ENCODE measurements at regions of chr14 and their contacts with region 1.

Region 1: GRCh38 chr14:99628832-99629618 is 15.9 kb upstream of the HHIPL1 start:
- DNase-seq: no peak
- H3K4me3 ChIP-seq: 0 out of 2 replicates have a peak overlapping the region, but pooled peaks have one; percentile 15
- CTCF ChIP-seq: peak; percentile 99

Region 2: GRCh38 chr14:99511421-99512109 is 117.5 kb before region 1 on chr14:
- CTCF ChIA-PET with region 1: interaction called, 41 read pairs
- POLR2A ChIA-PET with region 1: no interaction called
- DNase-seq: peak; percentile 49
- H3K4me3 ChIP-seq: no peak overlapping the region
- CTCF ChIP-seq: no peak

Region 3: GRCh38 chr14:99518441-99519346 is 110.3 kb before region 1 on chr14:
- CTCF ChIA-PET with region 1: interaction called, 174 read pairs
- POLR2A ChIA-PET with region 1: no interaction called
- DNase-seq: no peak
- H3K4me3 ChIP-seq: no peak overlapping the region
- CTCF ChIP-seq: peak; percentile 98

Region 4: GRCh38 chr14:99524804-99525698 is 104.0 kb before region 1 on chr14:
- CTCF ChIA-PET with region 1: interaction called, 174 read pairs
- POLR2A ChIA-PET with region 1: no interaction called
- DNase-seq: no peak
- H3K4me3 ChIP-seq: no peak overlapping the region
- CTCF ChIP-seq: peak; percentile 62

Region 5: DNA sequence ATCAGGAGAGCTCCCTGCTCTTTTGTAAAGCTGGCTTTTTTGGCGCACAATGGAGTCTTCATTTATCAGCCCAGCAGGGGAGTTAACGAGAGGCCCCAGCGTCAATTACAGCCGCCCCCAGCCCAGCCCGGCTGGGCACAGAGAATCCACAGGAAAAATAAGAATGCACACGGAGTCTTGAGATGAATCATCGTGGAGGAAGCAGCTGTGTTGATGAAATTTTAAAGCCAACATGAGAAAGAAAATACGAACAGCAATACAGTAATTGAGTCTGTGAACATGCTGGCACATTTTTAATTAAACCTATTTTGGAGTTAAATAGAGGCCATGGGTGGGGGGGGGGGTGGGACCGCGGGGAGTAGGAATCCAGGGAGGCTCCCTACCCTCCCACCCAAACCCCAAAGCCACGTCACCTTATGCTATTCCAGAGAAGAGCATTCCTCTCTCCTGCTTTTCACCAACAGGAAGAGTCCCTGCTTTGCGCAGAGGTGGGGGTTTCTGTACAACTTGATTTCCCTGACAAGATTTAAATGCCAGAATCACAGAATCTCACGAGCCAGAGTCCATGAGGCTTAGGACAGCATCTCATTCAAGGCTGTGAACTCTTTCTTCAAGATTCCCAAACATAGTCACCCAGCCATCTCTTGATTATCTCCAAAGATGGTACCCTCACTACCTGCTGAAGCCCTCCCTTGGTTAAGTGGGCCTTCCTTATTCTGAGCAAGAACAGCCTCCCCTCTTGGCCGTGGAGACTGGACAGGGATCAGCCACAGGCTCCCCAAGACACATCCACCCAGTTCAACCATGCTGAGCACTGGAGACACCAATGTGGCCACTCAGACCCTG is 97.6 kb before region 1 on chr14:
- CTCF ChIA-PET with region 1: interaction called, 174 read pairs
- POLR2A ChIA-PET with region 1: no interaction called
- DNase-seq: peak; percentile 28
- H3K4me3 ChIP-seq: no peak overlapping the region
- CTCF ChIP-seq: no peak

Region 6: GRCh38 chr14:99609245-99610117 is 19.5 kb before region 1 on chr14:
- CTCF ChIA-PET with region 1: interaction called, 15 read pairs
- POLR2A ChIA-PET with region 1: interaction called, 18 read pairs
- DNase-seq: no peak
- H3K4me3 ChIP-seq: no peak overlapping the region
- CTCF ChIP-seq: peak; percentile 56

Region 7: DNA sequence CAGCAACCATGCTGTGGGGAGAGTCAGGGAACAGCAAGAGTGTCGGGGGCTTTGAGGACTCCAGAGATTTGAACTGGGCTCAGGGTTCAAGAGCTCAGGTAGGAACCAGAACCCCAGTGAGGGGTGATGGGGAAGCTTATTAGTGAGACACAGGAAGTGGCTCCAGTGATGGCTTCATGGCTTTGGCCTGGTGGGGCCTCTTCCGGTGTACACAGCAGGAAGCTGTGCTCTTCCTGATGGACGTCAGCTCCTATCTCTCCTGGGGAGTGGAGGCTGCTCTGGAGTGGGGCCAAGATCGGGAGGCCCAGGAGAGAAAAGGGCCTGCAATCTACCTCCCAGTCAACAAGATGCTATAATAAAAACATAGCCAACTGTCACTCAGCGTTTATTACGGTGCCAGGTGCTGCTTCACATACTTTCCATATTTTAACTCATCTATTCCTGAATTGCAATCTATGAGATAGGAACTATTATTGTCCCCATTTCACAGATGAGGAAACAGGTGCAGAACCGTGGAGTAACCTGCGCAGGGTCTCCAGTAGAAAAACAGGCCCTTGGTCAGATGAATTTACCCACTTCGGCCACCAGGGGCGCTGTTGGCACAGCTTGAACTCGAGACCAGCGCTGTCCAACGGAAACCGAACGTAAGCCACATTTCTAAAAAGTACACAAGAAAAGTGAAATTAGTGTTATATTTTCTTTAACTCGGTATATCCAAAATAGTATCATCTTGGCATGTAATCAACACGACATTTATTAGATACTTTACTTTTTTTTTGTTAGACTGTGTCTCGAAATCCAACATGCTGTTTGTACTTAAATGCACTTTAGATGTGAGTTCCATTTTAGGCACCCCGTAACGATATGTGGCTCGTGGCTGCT is 1034.1 kb after region 1 on chr14:
- CTCF ChIA-PET with region 1: no interaction called
- POLR2A ChIA-PET with region 1: no interaction called
- DNase-seq: no peak
- H3K4me3 ChIP-seq: no peak overlapping the region
- CTCF ChIP-seq: peak; percentile 84

Measured in AG04449 (cell line).